MCF 10A (cell line): ENCODE measurements at regions of chr11 and their contacts with region 1.

Region 1: GRCh38 chr11:62309991-62310390 is 11.1 kb upstream of the SCGB1D4 start:
- DNase-seq: no peak
- H3K4me3 Mint-ChIP-seq: no peak overlapping the region
- H3K27ac Mint-ChIP-seq: no peak overlapping the region
- H3K4me1 Mint-ChIP-seq: peaks cover 6% of the 10 kb centered on the region
- H3K27me3 Mint-ChIP-seq: peaks cover 69% of the 10 kb centered on the region
- CTCF ChIP-seq: no peak

Region 2: GRCh38 chr11:62217191-62217748 is 92.7 kb before region 1 on chr11:
- CTCF ChIA-PET with region 1: interaction called, 17 read pairs
- POLR2A ChIA-PET with region 1: no interaction called
- intact Hi-C with region 1: loop called (anchors 1 kb)
- DNase-seq: peak; percentile 39
- H3K4me3 Mint-ChIP-seq: no peak overlapping the region
- H3K27ac Mint-ChIP-seq: no peak overlapping the region
- H3K4me1 Mint-ChIP-seq: no peaks in the 10 kb centered on the region
- H3K27me3 Mint-ChIP-seq: no peaks in the 10 kb centered on the region
- CTCF ChIP-seq: peak; percentile 36

Region 3: GRCh38 chr11:62233730-62234129 is 76.3 kb before region 1 on chr11:
- CTCF ChIA-PET with region 1: interaction called, 44 read pairs
- POLR2A ChIA-PET with region 1: no interaction called
- intact Hi-C with region 1: loop called (anchors 1 kb)
- DNase-seq: peak; percentile 7
- H3K4me3 Mint-ChIP-seq: no peak overlapping the region
- H3K27ac Mint-ChIP-seq: no peak overlapping the region
- H3K4me1 Mint-ChIP-seq: no peaks in the 10 kb centered on the region
- H3K27me3 Mint-ChIP-seq: peaks cover 58% of the 10 kb centered on the region
- CTCF ChIP-seq: peak; percentile 10

Region 4: GRCh38 chr11:62831520-62832335 is 521.7 kb after region 1 on chr11 and contains the start of gene STX5:
- CTCF ChIA-PET with region 1: no interaction called
- POLR2A ChIA-PET with region 1: no interaction called
- intact Hi-C with region 1: no loop called
- DNase-seq: peak; percentile 98
- H3K4me3 Mint-ChIP-seq: peak within 1 kb of the TSS; percentile 89
- H3K27ac Mint-ChIP-seq: peak within 1 kb of the TSS; percentile 99
- H3K4me1 Mint-ChIP-seq: peaks cover 31% of the 10 kb centered on the region
- H3K27me3 Mint-ChIP-seq: no peaks in the 10 kb centered on the region
- CTCF ChIP-seq: no peak
- total RNA-seq, gene STX5: 71.8 and 72.0 TPM in 2 replicates